ENCODE measurements at regions of chr3 and their contacts with region 1.

Region 1: GRCh38 chr3:120017692-120018091 is 76.6 kb downstream of the GSK3B start:
- DNase-seq: no peak
- H3K4me3 ChIP-seq: no peak overlapping the region
- H3K4me3 Mint-ChIP-seq: peak overlapping the region in 2 of 8 donors; percentile 4 to 70
- H3K27ac ChIP-seq: no peak overlapping the region
- H3K27ac Mint-ChIP-seq: peak overlapping the region in 1 of 7 donors; percentile 63
- H3K4me1 ChIP-seq: peaks cover 40% of the 10 kb centered on the region
- H3K4me1 Mint-ChIP-seq: peaks cover 41 to 74% (median 59%) of the 10 kb centered on the region in 4 donors
- H3K27me3 ChIP-seq: no peaks in the 10 kb centered on the region
- H3K27me3 Mint-ChIP-seq: no peaks in the 10 kb centered on the region

Region 2: GRCh38 chr3:120052225-120052624 is 34.5 kb after region 1 on chr3:
- CTCF ChIA-PET with region 1: no interaction called
- POLR2A ChIA-PET with region 1: no interaction called
- intact Hi-C with region 1: loop called (anchors 5 kb)
- DNase-seq: no peak
- H3K4me3 ChIP-seq: no peak overlapping the region
- H3K4me3 Mint-ChIP-seq: peak overlapping the region in 6 of 8 donors; percentile 32 to 65 (median 52)
- H3K27ac ChIP-seq: no peak overlapping the region
- H3K27ac Mint-ChIP-seq: peak overlapping the region in 5 of 7 donors; percentile 0 to 73 (median 30)
- H3K4me1 ChIP-seq: peaks cover 50% of the 10 kb centered on the region
- H3K4me1 Mint-ChIP-seq: peaks cover 59 to 92% (median 72%) of the 10 kb centered on the region in 4 donors
- H3K27me3 ChIP-seq: no peaks in the 10 kb centered on the region
- H3K27me3 Mint-ChIP-seq: no peaks in the 10 kb centered on the region

Measured in CD4-positive, alpha-beta memory T cell (primary cell).